PC-3 (cell line): ENCODE measurements at regions of chr4 and their contacts with region 1.

Region 1: DNA sequence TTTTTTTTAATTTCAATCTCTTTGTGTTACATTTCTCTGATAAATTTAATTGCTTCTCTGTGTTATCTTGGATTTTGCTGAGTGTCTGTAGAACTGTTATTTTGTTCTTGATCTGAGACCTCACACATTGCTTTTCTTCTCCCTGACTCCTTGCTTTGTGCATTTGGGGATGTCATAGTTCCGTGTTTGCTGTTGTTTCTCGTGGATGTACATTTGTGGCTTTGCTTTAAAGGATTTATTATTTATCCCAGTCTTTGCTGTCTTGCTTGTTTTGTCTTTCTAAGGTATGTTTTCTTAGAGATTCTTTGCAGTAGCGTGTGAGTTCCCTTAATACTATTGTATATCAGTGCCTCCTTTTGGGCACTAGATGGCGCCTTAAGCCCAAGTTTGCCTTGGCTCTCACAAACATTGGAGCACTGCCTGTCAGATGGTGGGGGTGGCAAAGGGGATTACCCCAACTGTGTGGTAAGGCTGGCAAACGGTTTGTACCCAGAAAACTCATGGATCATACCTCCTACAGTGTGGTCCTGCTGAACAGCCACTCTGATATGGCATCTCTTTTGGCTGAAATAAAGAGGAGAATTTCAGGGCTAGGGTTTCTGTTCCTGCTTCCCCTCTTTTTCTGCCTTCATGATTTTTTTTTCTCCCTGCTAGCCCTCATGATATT is 96.4 kb downstream of the PGRMC2 start:
- DNase-seq: peak; percentile 71
- ATAC-seq: peak; percentile 67
- H3K4me3 ChIP-seq: no peak overlapping the region
- H3K27ac ChIP-seq: no peak overlapping the region
- H3K4me1 ChIP-seq: no peaks in the 10 kb centered on the region
- H3K27me3 ChIP-seq: no peaks in the 10 kb centered on the region
- CTCF ChIP-seq: peak; percentile 91

Region 2: DNA sequence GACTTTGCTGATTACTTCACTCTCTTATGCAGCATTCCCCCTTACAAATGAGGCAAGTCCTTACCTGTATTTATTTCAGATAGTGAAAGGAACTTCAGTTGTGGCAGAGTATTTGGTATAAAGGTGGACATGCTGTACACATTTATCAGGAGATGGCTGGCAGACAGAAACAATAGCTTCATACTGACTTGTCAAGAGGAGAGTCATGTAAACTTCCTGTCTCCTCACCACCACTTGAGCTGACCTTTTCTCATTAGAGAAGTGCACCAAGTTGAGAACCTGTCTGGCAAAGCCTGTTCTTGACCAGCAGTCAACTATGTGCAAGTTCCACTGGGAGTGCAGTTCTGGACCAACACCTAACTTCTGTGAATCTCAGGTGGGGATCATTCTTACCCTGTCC is 49.4 kb before region 1 on chr4:
- CTCF ChIA-PET with region 1: no interaction called
- POLR2A ChIA-PET with region 1: no interaction called
- intact Hi-C with region 1: no loop called
- DNase-seq: no peak
- ATAC-seq: no peak
- H3K4me3 ChIP-seq: no peak overlapping the region
- H3K27ac ChIP-seq: no peak overlapping the region
- H3K4me1 ChIP-seq: no peaks in the 10 kb centered on the region
- H3K27me3 ChIP-seq: no peaks in the 10 kb centered on the region
- CTCF ChIP-seq: no peak

Region 3: DNA sequence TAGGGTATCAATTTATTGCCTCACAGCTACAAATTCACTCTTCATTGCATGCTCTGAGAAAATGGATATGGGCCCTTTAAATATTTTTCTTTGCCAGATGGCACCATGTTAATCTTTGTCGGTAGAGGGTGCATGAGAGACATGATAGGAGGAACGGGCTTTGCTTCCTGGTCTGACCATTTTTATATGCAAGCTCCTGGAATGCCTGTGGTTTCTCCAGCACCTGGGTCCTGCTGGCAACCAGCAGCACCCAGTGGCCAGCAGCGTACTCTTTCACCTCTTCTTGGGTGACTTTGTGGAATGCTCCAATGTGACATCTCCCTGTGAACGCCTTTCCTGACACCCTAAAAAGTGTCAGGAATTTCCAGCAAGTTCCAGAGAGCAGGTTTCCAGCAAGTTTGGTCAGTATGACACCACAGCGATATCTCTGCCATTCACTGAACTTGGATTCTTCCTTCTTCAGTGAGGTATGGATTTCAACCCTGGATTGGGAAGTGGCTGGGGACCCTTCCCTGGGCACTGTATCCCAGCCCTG is 236.7 kb after region 1 on chr4:
- CTCF ChIA-PET with region 1: no interaction called
- POLR2A ChIA-PET with region 1: no interaction called
- intact Hi-C with region 1: loop called (anchors 1 kb)
- DNase-seq: peak; percentile 87
- ATAC-seq: peak; percentile 100
- H3K4me3 ChIP-seq: no peak overlapping the region
- H3K27ac ChIP-seq: no peak overlapping the region
- H3K4me1 ChIP-seq: peaks cover 7% of the 10 kb centered on the region
- H3K27me3 ChIP-seq: no peaks in the 10 kb centered on the region
- CTCF ChIP-seq: peak; percentile 77

Region 4: DNA sequence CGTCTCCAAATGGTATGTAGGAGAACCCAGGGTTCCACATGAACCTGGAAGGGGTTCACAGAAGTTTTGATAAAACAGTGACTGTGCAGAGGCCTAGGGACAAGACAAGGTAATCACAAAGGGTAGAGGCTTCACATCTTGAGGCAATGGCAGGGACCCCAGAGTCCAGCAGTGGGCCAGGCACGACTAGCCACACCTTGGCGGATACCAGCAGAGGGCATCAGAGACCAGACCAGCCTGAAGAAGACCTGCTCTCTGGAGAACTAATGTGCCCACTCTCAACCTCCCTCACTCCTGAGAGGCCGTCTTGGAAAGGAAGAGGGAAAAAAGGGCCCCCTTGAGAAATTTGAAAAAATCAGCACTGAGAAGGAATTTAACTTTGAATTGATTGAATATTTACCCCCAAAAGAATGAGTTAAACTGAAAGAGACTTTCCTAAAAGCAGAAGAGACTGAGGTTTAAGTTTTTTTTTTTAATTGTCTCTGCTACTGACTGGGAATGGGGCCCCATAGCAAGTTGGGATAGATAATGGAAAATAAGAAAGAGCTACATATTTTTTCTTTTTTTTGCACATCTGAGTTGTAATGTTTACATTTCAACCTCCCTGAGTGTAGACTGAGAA is 374.4 kb after region 1 on chr4:
- CTCF ChIA-PET with region 1: no interaction called
- POLR2A ChIA-PET with region 1: no interaction called
- intact Hi-C with region 1: loop called (anchors 10 kb)
- DNase-seq: peak; percentile 46
- ATAC-seq: peak; percentile 71
- H3K4me3 ChIP-seq: no peak overlapping the region
- H3K27ac ChIP-seq: no peak overlapping the region
- H3K4me1 ChIP-seq: peaks cover 12% of the 10 kb centered on the region
- H3K27me3 ChIP-seq: no peaks in the 10 kb centered on the region
- CTCF ChIP-seq: peak; percentile 72